ENCODE measurements at regions of chrX and their contacts with region 1.

Region 1: GRCh38 chrX:154458114-154458953 is at the start of gene PLXNA3:
- DNase-seq: no peak
- H3K4me3 ChIP-seq: peak within 1 kb of the TSS; percentile 72
- CTCF ChIP-seq: no peak

Region 2: DNA sequence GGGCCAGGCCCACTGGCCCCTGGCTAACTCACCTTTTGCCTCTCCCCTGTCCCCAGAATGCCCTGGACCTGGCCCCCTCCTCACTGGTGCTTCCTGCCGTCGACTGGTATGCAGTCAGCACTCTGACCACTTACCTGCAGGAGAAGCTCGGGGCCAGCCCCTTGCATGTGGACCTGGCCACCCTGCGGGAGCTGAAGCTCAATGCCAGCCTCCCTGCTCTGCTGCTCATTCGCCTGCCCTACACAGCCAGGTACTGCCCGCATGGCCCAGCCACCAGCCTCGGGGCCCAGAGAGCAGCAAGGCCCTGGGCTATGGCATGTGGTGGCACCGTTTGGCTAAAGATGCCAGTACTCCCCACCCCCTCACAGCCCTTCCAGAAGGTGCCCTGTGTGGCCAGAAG is 26.1 kb before region 1 on chrX:
- CTCF ChIA-PET with region 1: no interaction called
- POLR2A ChIA-PET with region 1: no interaction called
- DNase-seq: no peak
- H3K4me3 ChIP-seq: no peak overlapping the region
- CTCF ChIP-seq: no peak

Region 3: DNA sequence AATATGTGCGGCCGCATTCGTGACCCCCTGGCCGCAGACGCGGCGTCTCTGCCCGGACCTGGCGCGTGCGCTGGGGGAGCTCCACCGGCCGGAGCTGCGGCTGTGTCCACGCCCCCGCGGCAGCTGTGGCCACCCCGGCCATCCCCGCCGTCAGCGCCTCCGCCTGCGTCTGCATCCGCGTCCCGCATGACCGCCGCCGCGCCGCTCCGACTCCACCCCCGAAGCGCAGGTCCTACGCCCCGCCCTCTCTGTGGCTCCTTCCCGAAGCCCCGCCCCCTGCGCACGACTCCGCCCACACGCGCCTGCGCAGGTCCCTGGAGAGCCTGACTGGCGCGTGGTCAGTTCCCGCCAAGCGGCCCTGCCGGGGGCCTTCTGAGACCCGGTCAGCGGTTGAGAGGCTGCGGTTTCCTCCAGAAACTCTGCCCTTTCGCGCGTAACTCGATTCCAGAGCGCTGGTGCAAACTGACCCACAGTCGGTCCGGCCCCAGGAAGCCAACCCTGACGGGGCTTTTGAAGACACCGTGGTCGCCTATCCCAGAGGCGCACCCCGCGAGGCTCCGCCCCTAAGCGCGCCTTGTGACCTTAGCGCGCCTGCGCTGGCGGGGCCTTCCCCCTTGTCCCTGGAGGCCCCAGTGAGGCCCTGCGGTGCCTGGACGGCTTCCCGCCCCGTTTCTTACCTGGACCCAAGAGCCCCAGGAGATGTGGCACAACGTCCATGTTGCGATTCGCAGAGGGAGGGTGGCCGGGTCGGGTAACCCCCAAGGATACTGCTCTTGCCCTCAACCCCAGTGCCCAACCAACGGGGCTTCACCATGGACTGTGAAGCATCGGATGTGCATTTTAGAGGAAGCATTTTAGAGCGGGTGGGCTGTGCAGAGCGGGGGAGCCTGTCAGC is 20.6 kb after region 1 on chrX and contains the start of gene LAGE3:
- CTCF ChIA-PET with region 1: interaction called, 4 read pairs
- POLR2A ChIA-PET with region 1: interaction called, 16 read pairs
- DNase-seq: peak; percentile 26
- H3K4me3 ChIP-seq: peak within 1 kb of the TSS; percentile 63
- CTCF ChIP-seq: no peak